ENCODE measurements at regions of chr7 and their contacts with region 1.

Region 1: DNA sequence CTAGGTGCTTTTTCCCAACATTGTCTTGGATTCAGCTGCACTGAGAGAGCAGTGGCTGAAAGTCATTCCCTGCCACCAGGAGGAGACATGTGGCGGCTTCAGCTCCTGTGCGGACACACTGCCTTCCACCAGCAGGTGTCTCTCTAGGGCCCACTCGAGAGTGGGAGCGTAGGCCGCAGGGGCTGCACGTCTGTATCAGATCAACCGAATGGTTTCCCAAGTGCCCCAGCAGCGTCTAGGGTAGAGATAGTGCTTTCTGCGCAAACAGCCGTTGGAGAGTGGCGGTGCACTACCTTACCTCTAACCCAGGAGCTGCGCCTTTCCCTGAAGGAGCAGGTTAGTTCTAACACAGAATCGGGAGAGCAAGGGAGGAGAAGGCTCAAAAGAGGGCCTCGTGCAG is 31.7 kb downstream of the PAPOLB start:
- DNase-seq: peak; percentile 88
- ATAC-seq: peak; percentile 98
- H3K4me3 Mint-ChIP-seq: no peak overlapping the region
- H3K27ac Mint-ChIP-seq: peak overlapping the region; percentile 87
- H3K4me1 Mint-ChIP-seq: peaks cover 2% of the 10 kb centered on the region
- H3K27me3 Mint-ChIP-seq: no peaks in the 10 kb centered on the region
- CTCF ChIP-seq: peak; percentile 66; the same call in 1 of the 2 replicates

Region 2: GRCh38 chr7:4819560-4820404 is 10.4 kb before region 1 on chr7:
- CTCF ChIA-PET with region 1: interaction called, 22 read pairs
- POLR2A ChIA-PET with region 1: interaction called, 6 read pairs
- DNase-seq: no peak
- ATAC-seq: no peak
- H3K4me3 Mint-ChIP-seq: no peak overlapping the region
- H3K27ac Mint-ChIP-seq: no peak overlapping the region
- H3K4me1 Mint-ChIP-seq: no peaks in the 10 kb centered on the region
- H3K27me3 Mint-ChIP-seq: no peaks in the 10 kb centered on the region
- CTCF ChIP-seq: no peak

Region 3: DNA sequence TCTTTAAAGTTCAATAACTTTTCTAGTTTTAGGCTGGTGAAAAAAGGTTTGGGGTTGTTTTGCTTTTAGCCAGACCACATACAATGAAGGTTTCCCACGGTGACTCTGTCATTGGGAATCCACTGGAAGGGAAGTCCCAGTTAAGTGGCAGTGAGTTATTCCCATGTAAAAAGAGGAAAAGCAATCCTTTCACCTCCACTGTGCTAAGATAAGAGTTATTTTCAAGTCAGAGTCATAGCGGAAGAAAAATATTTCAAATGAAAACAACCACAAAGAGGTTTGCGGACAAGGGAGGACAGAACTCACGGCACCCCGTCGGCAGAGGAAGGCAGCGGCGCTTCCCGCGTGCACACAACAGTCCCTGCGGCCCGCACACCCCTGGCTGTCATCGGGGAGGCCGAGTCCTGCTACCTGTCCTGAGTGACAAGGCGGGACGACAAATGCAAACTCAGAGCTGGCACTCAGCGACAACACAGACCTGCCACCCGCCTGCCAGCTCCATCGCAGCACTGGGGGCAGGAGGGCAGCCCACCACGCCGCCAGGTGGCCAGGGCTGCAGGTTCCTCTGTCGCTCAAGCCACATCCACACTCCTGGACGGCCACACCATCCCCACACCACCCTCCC is 41.0 kb after region 1 on chr7:
- CTCF ChIA-PET with region 1: interaction called, 12 read pairs
- POLR2A ChIA-PET with region 1: no interaction called
- DNase-seq: no peak
- ATAC-seq: no peak
- H3K4me3 Mint-ChIP-seq: no peak overlapping the region
- H3K27ac Mint-ChIP-seq: no peak overlapping the region
- H3K4me1 Mint-ChIP-seq: peaks cover 11% of the 10 kb centered on the region
- H3K27me3 Mint-ChIP-seq: no peaks in the 10 kb centered on the region; the same call in 1 of the 2 replicates
- CTCF ChIP-seq: no peak

Region 4: DNA sequence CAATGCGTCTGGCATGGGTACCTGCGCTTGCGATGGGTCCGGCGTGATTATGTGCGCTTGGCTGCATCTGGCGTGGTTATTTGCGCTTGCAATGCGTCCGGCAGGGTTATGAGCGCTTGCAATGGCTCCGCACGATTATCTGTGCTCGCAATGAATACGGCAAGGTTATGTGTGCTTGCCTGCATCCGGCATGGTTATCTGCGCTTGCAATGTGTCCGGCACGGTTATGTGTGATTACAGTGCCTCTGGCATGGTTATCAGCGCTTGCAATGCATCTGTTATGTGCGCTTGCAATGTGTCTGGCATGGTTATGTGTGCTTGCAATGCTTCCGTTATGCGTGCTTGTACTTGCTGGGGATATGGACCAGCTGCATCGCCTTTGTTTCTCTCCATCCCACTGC is 253.1 kb after region 1 on chr7:
- CTCF ChIA-PET with region 1: interaction called, 28 read pairs
- POLR2A ChIA-PET with region 1: no interaction called
- DNase-seq: no peak
- ATAC-seq: no peak
- H3K4me3 Mint-ChIP-seq: no peak overlapping the region
- H3K27ac Mint-ChIP-seq: no peak overlapping the region
- H3K4me1 Mint-ChIP-seq: no peaks in the 10 kb centered on the region
- H3K27me3 Mint-ChIP-seq: peaks cover 22% of the 10 kb centered on the region
- CTCF ChIP-seq: no peak

Measured in WTC11 (cell line).